H1 (cell line): ENCODE measurements at regions of chr17 and their contacts with region 1.

Region 1: GRCh38 chr17:63675607-63676413 is 24.1 kb downstream of the LIMD2 start:
- DNase-seq: no peak
- H3K4me3 ChIP-seq: no peak overlapping the region
- H3K27ac ChIP-seq: no peak overlapping the region
- H3K4me1 ChIP-seq: peaks cover 3 to 13% (median 6%) of the 10 kb centered on the region in 4 experiments; a peak in 6 of 7 replicates
- H3K27me3 ChIP-seq: no peaks in the 10 kb centered on the region
- CTCF ChIP-seq: no peak
- EP300 ChIP-seq: no peak
- POLR2A ChIP-seq: no peak
- RAD21 ChIP-seq: no peak

Region 2: DNA sequence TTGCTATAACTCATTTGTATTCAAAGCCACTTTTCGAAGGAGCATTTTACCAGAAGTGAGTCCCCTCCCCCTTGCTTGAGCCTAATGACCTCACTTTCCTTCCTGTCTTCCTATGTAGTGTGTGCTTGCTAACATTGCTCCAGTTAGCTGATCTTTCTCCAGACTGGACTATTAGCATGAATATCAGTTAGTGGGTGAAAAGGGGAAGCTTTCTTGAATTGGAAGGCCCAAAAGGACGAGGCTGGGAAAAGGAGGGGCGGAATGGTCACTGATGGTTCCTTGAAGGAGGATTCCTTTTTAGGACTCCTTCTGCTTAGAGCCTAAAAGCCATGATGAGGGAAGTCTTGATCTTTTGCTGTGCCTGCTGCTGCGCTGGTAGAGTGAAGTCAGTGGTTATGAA is 41.6 kb before region 1 on chr17:
- CTCF ChIA-PET with region 1: interaction called, 10 read pairs
- POLR2A ChIA-PET with region 1: no interaction called
- DNase-seq: no peak
- H3K4me3 ChIP-seq: no peak overlapping the region
- H3K27ac ChIP-seq: peak overlapping the region; percentile 20; the same call in 1 of the 2 replicates
- H3K4me1 ChIP-seq: peaks cover 0 to 6% (median 4%) of the 10 kb centered on the region in 4 experiments; a peak in 4 of 7 replicates
- H3K27me3 ChIP-seq: no peaks in the 10 kb centered on the region
- CTCF ChIP-seq: no peak
- EP300 ChIP-seq: no peak
- POLR2A ChIP-seq: no peak
- RAD21 ChIP-seq: no peak

Region 3: DNA sequence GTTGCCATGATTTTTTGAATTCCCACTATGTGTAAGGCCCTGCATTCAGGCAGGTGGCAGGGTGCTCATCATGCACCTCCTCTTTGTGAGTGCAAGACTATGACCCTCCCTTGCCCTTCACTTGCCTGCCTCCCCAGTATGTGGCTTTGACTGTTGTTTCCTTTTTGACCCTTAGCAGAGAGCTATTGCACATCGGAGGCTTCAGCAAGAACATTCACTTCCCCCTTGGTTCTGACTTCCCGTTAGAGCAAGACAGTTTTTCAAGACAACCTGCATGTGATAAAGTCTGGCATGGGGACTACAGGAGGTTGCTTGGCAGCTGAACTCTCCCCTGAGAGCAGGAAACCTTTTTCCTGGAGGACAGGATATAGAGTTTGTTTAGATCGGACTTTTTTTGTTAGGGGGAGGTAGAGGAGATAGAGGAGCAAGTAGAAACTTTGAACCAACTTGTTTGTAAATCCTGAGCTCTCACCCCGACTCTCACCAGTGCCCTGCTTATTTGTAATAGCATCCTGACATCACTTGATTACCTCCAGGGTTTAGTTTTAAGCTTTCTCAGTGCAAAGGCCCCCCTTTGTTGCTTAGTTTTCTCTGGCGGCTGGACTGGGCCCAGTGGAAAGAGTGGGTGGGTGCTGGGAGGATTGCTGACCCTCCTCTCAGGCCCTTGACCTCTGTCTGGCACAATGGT is 10.1 kb before region 1 on chr17:
- CTCF ChIA-PET with region 1: interaction called, 20 read pairs
- POLR2A ChIA-PET with region 1: interaction called, 6 read pairs
- DNase-seq: no peak
- H3K4me3 ChIP-seq: no peak overlapping the region
- H3K27ac ChIP-seq: no peak overlapping the region
- H3K4me1 ChIP-seq: no peaks in the 10 kb centered on the region
- H3K27me3 ChIP-seq: no peaks in the 10 kb centered on the region
- CTCF ChIP-seq: no peak
- EP300 ChIP-seq: no peak
- POLR2A ChIP-seq: no peak
- RAD21 ChIP-seq: no peak

Region 4: DNA sequence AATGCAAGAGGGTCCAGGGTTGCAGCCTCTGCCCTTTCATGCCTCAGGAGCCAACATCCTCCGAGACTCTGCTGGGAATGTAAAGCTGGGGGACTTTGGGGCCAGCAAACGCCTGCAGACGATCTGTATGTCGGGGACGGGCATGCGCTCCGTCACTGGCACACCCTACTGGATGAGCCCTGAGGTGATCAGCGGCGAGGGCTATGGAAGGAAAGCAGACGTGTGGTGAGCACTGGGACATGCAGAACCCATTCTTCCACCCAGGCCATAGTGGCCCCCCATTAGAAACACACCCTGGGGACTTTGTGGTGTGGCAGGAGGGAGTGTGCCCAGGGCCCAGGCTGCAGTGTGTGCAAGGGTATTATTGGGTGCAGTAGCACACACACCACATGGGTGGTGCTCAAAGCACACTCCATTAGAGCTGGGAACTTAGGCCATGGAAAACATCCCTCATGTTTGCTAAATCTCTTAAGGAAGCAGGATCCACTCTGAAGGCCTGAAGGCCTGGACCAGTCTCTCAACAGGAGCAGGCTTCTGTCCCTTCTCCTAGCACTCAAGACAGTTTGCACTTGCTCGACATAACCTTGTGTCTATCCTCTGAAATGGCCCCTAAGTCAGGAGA is 16.5 kb after region 1 on chr17:
- CTCF ChIA-PET with region 1: interaction called, 63 read pairs
- POLR2A ChIA-PET with region 1: interaction called, 4 read pairs
- DNase-seq: no peak
- H3K4me3 ChIP-seq: no peak overlapping the region
- H3K27ac ChIP-seq: no peak overlapping the region
- H3K4me1 ChIP-seq: peaks cover 0 to 6% (median 2%) of the 10 kb centered on the region in 4 experiments; a peak in 3 of 7 replicates
- H3K27me3 ChIP-seq: no peaks in the 10 kb centered on the region
- CTCF ChIP-seq: peak in 1 of 3 experiments; percentile 21; a peak in 1 of 4 replicates
- EP300 ChIP-seq: no peak
- POLR2A ChIP-seq: no peak
- RAD21 ChIP-seq: no peak

Region 5: GRCh38 chr17:63697341-63698286 is 21.8 kb after region 1 on chr17:
- CTCF ChIA-PET with region 1: interaction called, 63 read pairs
- POLR2A ChIA-PET with region 1: interaction called, 4 read pairs
- DNase-seq: peak in 1 of 2 experiments; percentile 82
- H3K4me3 ChIP-seq: peak overlapping the region in 1 of 4 experiments; percentile 83; a peak in 2 of 8 replicates
- H3K27ac ChIP-seq: no peak overlapping the region
- H3K4me1 ChIP-seq: peaks cover 3 to 25% (median 17%) of the 10 kb centered on the region in 4 experiments; a peak in 6 of 7 replicates
- H3K27me3 ChIP-seq: peaks cover 0 to 5% (median 0%) of the 10 kb centered on the region in 4 experiments; a peak in 3 of 7 replicates
- CTCF ChIP-seq: peak; percentile 76 to 82 (median 76)
- EP300 ChIP-seq: no peak
- POLR2A ChIP-seq: no peak; a peak in 2 of 3 replicates
- RAD21 ChIP-seq: peak; percentile 43 to 47